Dendritic cell treated with granulocyte-macrophage colony-stimulating factor and Interleukin-4, amounts not matched to agents 40 ng/mL and 50 ng/mL, for 4 days (primary cell): ENCODE measurements at regions of chr9 and their contacts with region 1.

Region 1: GRCh38 chr9:72305102-72305546 is 59.9 kb downstream of the ZFAND5 start:
- H3K4me3 Mint-ChIP-seq: peak overlapping the region; percentile 77
- H3K27ac Mint-ChIP-seq: peak overlapping the region; percentile 96
- H3K4me1 Mint-ChIP-seq: peaks cover 62% of the 10 kb centered on the region
- H3K27me3 Mint-ChIP-seq: no peaks in the 10 kb centered on the region

Region 2: GRCh38 chr9:71911253-71912074 is 393.7 kb before region 1 on chr9 and contains the start of gene C9orf85:
- intact Hi-C with region 1: loop called (anchors 10 kb)
- H3K4me3 Mint-ChIP-seq: peak within 1 kb of the TSS; percentile 90
- H3K27ac Mint-ChIP-seq: peak within 1 kb of the TSS; percentile 95
- H3K4me1 Mint-ChIP-seq: peaks cover 44% of the 10 kb centered on the region
- H3K27me3 Mint-ChIP-seq: no peaks in the 10 kb centered on the region

Region 3: GRCh38 chr9:72292256-72292682 is 12.9 kb before region 1 on chr9:
- intact Hi-C with region 1: loop called (anchors 1 kb)
- H3K4me3 Mint-ChIP-seq: peak overlapping the region; percentile 5
- H3K27ac Mint-ChIP-seq: peak overlapping the region; percentile 98
- H3K4me1 Mint-ChIP-seq: peaks cover 57% of the 10 kb centered on the region
- H3K27me3 Mint-ChIP-seq: no peaks in the 10 kb centered on the region

Region 4: GRCh38 chr9:72364679-72365524 is 59.8 kb after region 1 on chr9 and contains the start of gene ZFAND5:
- intact Hi-C with region 1: loop called (anchors 2 kb)
- H3K4me3 Mint-ChIP-seq: peak within 1 kb of the TSS; percentile 76
- H3K27ac Mint-ChIP-seq: peak within 1 kb of the TSS; percentile 97
- H3K4me1 Mint-ChIP-seq: peaks cover 16% of the 10 kb centered on the region
- H3K27me3 Mint-ChIP-seq: no peaks in the 10 kb centered on the region

Region 5: DNA sequence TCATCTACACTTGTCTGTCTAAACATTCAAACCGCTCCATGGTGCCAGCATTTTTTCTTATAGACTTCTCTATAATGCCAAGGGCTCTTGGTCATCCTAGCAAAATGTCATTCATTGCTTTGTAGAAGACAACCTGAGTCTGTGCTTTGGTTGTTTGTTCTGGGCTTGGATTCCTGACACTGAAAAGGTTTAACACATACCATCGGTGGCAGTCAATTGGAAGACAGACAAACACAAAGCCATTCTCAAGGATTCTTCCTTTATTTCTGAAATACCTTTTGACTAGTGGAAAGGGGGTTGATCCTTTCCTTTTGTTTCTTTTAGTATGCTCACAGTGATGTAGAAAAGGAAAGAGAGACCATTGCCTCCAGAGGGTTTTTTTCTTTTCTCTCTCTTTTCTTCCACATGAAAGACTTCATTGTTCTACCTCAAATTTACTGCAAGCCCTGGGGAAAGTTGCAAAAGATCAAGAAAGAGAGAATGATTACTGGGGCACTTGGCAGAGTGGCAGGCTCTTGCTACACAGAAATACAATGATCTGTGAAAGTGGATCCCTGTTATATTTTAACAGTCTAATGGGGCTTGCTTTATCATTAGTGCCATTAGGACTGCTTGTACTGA is 149.9 kb after region 1 on chr9:
- intact Hi-C with region 1: no loop called
- H3K4me3 Mint-ChIP-seq: no peak overlapping the region
- H3K27ac Mint-ChIP-seq: no peak overlapping the region
- H3K4me1 Mint-ChIP-seq: no peaks in the 10 kb centered on the region
- H3K27me3 Mint-ChIP-seq: no peaks in the 10 kb centered on the region

Region 6: DNA sequence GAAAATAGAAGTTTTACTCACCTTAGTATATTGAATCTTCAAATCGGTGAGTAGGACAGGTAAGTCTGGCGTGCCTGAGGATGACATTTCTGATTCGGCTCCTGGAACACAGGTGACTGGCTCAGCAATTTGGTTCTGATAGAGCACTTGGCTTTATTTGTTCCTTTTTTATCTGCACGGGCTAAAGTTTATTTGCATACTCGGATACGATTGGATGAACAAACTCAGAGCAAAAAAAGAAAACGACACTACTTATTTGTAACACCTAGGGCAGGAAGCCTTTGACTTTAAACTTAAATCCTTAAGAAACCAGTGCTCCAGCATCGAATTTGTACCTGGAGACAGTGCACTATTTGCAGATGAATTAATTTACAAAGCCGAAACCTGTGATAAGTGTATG is 647.8 kb after region 1 on chr9 and contains the start of gene ALDH1A1:
- intact Hi-C with region 1: loop called (anchors 10 kb)
- H3K4me3 Mint-ChIP-seq: peak within 1 kb of the TSS; percentile 67
- H3K27ac Mint-ChIP-seq: peak within 1 kb of the TSS; percentile 79
- H3K4me1 Mint-ChIP-seq: peaks cover 51% of the 10 kb centered on the region
- H3K27me3 Mint-ChIP-seq: peaks cover 4% of the 10 kb centered on the region

Region 7: DNA sequence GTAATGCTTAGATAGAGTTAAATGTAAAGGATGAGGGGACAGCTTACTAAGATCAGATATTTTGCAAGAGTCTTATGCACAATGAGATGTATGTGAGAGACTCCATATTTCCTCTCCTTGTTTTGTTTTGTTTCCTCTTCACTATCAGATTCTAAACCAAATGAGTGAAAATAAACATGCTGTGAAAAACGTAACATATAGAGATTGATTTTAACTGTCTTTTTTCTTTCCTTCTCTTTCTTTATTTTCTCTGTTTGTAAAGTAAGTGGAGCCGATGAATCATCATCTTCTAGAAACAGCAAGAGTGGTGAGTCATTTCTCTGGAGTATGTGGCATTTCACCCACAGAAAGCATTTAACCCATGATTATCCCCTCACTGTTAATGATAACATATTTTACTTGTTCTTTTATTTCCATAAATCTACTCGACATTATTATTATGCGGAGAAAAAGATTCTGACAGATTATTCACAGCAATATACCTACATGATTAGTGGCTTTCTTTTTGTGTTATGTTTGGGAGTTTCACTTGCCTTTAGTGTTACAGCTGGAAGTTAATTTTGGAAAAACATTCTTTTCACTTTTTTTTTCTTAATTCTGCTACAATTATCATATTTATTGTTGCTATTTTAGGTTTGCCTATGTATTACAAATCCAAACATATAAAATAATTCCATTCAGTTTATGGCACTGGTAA is 844.4 kb after region 1 on chr9:
- intact Hi-C with region 1: loop called (anchors 10 kb)
- H3K4me3 Mint-ChIP-seq: peak overlapping the region; percentile 31
- H3K27ac Mint-ChIP-seq: peak overlapping the region; percentile 87
- H3K4me1 Mint-ChIP-seq: peaks cover 41% of the 10 kb centered on the region
- H3K27me3 Mint-ChIP-seq: no peaks in the 10 kb centered on the region